ENCODE measurements at regions of chr4 and their contacts with region 1.

Region 1: DNA sequence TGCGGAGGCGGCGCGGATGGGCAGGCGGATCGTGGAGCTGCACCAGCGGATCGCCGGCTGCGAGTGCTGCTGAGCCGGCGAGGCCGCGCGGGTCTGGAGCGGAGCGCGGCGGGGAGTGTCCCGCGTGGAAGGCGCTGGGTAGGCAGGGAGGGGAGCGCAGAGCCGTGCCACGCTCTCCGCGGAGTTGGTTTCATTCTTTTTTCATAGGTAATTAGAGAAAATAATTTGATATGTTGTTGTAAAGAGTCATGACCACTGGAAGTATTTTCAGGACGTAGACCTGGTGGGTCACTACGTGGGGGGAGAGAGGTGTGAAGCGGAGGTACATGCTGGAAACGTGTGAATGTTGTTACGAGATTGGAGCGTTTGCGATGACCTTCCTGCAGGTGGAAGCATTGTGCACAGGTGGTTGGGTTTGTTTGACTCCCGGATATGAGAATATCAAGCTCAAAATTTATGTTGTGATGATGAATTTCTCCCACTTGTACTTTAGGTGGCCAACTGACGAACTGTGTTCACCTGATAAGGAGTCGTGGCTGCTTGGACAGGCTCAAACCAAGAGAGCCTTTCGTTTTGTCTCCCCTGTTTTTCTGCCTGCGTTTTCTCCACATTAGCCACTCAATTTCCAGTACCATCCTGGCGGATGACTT is 19.1 kb upstream of the S100P start:
- DNase-seq: no peak
- H3K4me3 ChIP-seq: peak overlapping the region; percentile 58 to 96 (median 81)
- H3K27ac ChIP-seq: peak overlapping the region; percentile 82 to 84
- H3K4me1 ChIP-seq: peaks cover 7 to 24% of the 10 kb centered on the region in 2 donors
- H3K27me3 ChIP-seq: no peaks in the 10 kb centered on the region
- CTCF ChIP-seq: peak in 1 of 3 donors; percentile 58
- POLR2A ChIP-seq: no peak

Region 2: DNA sequence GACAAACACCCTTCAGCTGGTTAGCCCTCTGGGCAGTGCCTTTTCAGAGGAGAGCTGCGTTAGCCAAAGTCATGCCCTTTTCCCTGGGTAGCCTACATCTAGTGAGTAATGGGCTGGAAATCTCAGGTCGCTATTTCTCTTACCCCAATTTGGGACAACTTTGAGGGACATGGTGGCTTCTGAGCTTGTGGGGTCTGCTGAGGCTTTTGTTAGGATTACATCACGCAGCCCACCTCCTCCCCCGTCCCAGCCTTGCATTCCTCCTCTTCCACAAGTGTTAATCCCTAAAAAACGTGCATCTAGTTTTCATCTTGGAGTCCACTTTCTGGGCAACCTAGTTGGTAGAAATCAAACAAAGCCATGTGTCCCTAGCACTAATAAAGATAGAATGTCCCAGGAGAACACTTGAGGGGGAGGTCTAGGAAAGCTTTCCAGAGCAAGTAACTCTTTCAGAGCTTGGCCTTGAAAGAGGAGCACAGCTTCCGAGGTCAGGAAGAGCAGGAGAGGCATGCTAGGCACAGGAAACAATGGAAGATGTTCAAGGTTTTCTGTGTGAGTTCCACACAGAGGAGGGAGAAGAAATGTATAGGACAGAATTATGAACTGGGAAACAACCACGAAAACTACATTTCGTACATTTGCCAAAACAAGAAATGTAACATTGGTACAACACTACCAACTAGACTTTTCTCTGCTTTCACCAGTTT is 31.3 kb before region 1 on chr4:
- intact Hi-C with region 1: loop called (anchors 1 kb)
- DNase-seq: peak in 1 of 2 donors; percentile 2
- H3K4me3 ChIP-seq: peak overlapping the region in 1 of 3 donors; percentile 2
- H3K27ac ChIP-seq: peak overlapping the region; percentile 33 to 97
- H3K4me1 ChIP-seq: peaks cover 3 to 9% of the 10 kb centered on the region in 2 donors
- H3K27me3 ChIP-seq: no peaks in the 10 kb centered on the region
- CTCF ChIP-seq: no peak
- POLR2A ChIP-seq: no peak

Measured in breast epithelium (tissue), 4 donors.